ENCODE measurements at regions of chr10 and their contacts with region 1.

Region 1: DNA sequence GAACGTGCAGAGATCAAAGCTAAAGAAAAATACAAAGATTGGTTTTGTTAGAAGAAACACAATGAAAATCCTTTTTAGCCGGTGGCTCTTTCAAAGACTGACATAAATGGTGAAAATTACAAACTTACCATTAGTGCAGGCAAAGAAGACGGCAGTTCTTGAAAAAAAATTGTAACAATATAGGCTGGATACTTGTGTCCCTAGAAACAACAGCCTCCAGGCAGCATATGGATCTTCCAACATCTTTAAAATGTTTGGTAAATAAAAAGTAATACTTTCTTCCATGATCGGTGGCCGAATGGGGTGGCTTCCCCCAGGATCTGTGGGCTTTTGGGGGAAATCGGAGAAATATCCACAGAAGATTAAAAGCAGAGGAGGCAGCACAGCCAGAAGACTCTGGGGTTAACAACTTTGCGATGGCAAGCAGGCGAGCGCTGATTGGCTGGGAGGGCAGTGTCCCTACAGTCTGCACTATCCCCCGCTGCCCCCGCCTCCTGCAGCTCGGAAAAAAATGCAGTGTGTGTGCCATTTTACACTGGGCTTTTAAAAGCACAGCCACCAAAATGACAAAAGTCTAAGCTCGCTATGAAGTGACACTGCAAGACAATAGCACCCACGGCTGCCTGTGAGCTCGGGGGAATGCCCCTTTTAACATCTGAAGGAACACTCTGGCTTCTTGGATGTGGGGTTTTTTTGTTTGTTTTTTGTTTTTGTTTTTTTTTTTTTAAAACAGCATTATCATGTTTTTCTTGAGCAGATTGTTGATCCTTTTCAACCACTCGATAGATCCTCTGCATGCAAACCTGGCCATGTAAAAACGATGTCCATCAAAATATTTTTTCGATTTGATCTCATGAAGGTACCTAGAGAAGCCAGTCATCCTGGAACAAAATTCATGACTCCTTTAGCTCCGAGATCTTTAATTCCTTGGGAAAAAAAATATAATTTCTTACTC is 31.7 kb upstream of the EPC1 start:
- DNase-seq: peak; percentile 97
- H3K4me3 Mint-ChIP-seq: no peak overlapping the region
- H3K27ac Mint-ChIP-seq: no peak overlapping the region
- H3K4me1 Mint-ChIP-seq: peaks cover 18% of the 10 kb centered on the region
- H3K27me3 Mint-ChIP-seq: no peaks in the 10 kb centered on the region

Region 2: GRCh38 chr10:32055813-32056600 is 322.6 kb before region 1 on chr10 and contains the start of gene KIF5B:
- intact Hi-C with region 1: loop called (anchors 2 kb)
- DNase-seq: peak; percentile 97
- H3K4me3 Mint-ChIP-seq: peak within 1 kb of the TSS; percentile 92
- H3K27ac Mint-ChIP-seq: peak within 1 kb of the TSS; percentile 96
- H3K4me1 Mint-ChIP-seq: peaks cover 36% of the 10 kb centered on the region
- H3K27me3 Mint-ChIP-seq: no peaks in the 10 kb centered on the region
- total RNA-seq, gene KIF5B: 81.3 and 82.2 TPM in 2 replicates

Region 3: GRCh38 chr10:32332299-32332750 is 46.3 kb before region 1 on chr10:
- intact Hi-C with region 1: loop called (anchors 1 kb)
- DNase-seq: peak; percentile 91
- H3K4me3 Mint-ChIP-seq: peak overlapping the region; percentile 75
- H3K27ac Mint-ChIP-seq: peak overlapping the region; percentile 91
- H3K4me1 Mint-ChIP-seq: peaks cover 76% of the 10 kb centered on the region
- H3K27me3 Mint-ChIP-seq: no peaks in the 10 kb centered on the region

Region 4: GRCh38 chr10:32362571-32362970 is 16.1 kb before region 1 on chr10:
- intact Hi-C with region 1: loop called (anchors 2 kb)
- DNase-seq: no peak
- H3K4me3 Mint-ChIP-seq: no peak overlapping the region
- H3K27ac Mint-ChIP-seq: peak overlapping the region; percentile 74
- H3K4me1 Mint-ChIP-seq: peaks cover 47% of the 10 kb centered on the region
- H3K27me3 Mint-ChIP-seq: no peaks in the 10 kb centered on the region

Region 5: GRCh38 chr10:33008499-33009243 is 630.0 kb after region 1 on chr10:
- intact Hi-C with region 1: loop called (anchors 2 kb)
- DNase-seq: peak; percentile 88
- H3K4me3 Mint-ChIP-seq: peak overlapping the region; percentile 79
- H3K27ac Mint-ChIP-seq: peak overlapping the region; percentile 45
- H3K4me1 Mint-ChIP-seq: peaks cover 19% of the 10 kb centered on the region
- H3K27me3 Mint-ChIP-seq: peaks cover 11% of the 10 kb centered on the region

Measured in activated CD4-positive, alpha-beta T cell treated with anti-CD3 and anti-CD28 coated beads, Interleukin-2, amount 10 ng/mL, durations not matched to agents 24 days and 14 days (primary cell).